HepG2 (cell line): ENCODE measurements at regions of chr2 and their contacts with region 1.

Region 1: GRCh38 chr2:226618875-226619605 is 180.6 kb downstream of the IRS1 start:
- DNase-seq: peak; percentile 98
- ATAC-seq: peak; percentile 86
- H3K4me3 ChIP-seq: peak overlapping the region in 1 of 3 experiments; percentile 18; a peak in 1 of 6 replicates
- H3K27ac ChIP-seq: peak overlapping the region; percentile 75
- H3K4me1 ChIP-seq: peaks cover 66% of the 10 kb centered on the region
- H3K27me3 ChIP-seq: no peaks in the 10 kb centered on the region
- CTCF ChIP-seq: no peak
- EP300 ChIP-seq: peak; percentile 26 to 100; a peak in 2 of 4 replicates
- POLR2A ChIP-seq: no peak
- RAD21 ChIP-seq: no peak

Region 2: GRCh38 chr2:225889446-225889850 is 729.6 kb before region 1 on chr2:
- CTCF ChIA-PET with region 1: no interaction called
- POLR2A ChIA-PET with region 1: no interaction called
- in situ Hi-C with region 1: loop called (anchors 25 kb)
- intact Hi-C with region 1: loop called (anchors 1 kb)
- DNase-seq: peak; percentile 57
- ATAC-seq: peak; percentile 71
- H3K4me3 ChIP-seq: no peak overlapping the region
- H3K27ac ChIP-seq: no peak overlapping the region
- H3K4me1 ChIP-seq: peaks cover 4% of the 10 kb centered on the region
- H3K27me3 ChIP-seq: no peaks in the 10 kb centered on the region
- CTCF ChIP-seq: peak; percentile 81
- EP300 ChIP-seq: peak in 1 of 2 experiments; percentile 49; a peak in 1 of 4 replicates
- POLR2A ChIP-seq: no peak
- RAD21 ChIP-seq: peak; percentile 51; the same call in 1 of the 2 replicates

Region 3: GRCh38 chr2:226215902-226216503 is 403.0 kb before region 1 on chr2:
- CTCF ChIA-PET with region 1: no interaction called
- POLR2A ChIA-PET with region 1: no interaction called
- in situ Hi-C with region 1: no loop called
- intact Hi-C with region 1: loop called (anchors 10 kb)
- DNase-seq: peak; percentile 63
- ATAC-seq: peak; percentile 99
- H3K4me3 ChIP-seq: no peak overlapping the region
- H3K27ac ChIP-seq: no peak overlapping the region
- H3K4me1 ChIP-seq: 0 out of 2 replicates have a peak, but pooled peaks cover 5% of the 10 kb centered on the region
- H3K27me3 ChIP-seq: no peaks in the 10 kb centered on the region
- CTCF ChIP-seq: peak; percentile 89
- EP300 ChIP-seq: peak in 1 of 2 experiments; percentile 45; a peak in 1 of 4 replicates
- POLR2A ChIP-seq: no peak
- RAD21 ChIP-seq: peak; percentile 78

Region 4: DNA sequence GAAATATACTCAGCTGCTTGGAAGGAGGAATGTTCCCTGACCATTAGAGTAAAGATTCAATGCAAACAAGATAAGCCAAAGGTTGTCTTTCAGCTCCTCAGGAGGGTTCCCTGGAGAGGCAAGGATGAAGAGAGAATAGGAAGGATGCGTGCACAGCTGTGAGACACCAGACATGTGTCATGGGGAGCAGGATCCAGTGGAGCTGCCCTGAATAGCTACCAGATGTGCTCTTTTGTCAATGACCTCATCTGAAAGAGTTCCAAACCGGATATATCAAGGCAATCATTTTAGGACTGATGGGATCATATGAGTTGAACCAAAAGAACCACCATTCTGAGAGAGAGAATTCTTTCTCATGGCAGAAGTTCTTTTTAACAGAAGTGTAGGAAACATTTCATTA is 310.1 kb before region 1 on chr2:
- CTCF ChIA-PET with region 1: no interaction called
- POLR2A ChIA-PET with region 1: no interaction called
- in situ Hi-C with region 1: no loop called
- intact Hi-C with region 1: no loop called
- DNase-seq: no peak
- ATAC-seq: no peak; the same call in 2 of the 3 replicates
- H3K4me3 ChIP-seq: no peak overlapping the region
- H3K27ac ChIP-seq: no peak overlapping the region
- H3K4me1 ChIP-seq: peaks cover 11% of the 10 kb centered on the region
- H3K27me3 ChIP-seq: no peaks in the 10 kb centered on the region
- CTCF ChIP-seq: no peak
- EP300 ChIP-seq: no peak
- POLR2A ChIP-seq: no peak
- RAD21 ChIP-seq: no peak

Region 5: GRCh38 chr2:226450141-226450540 is 168.9 kb before region 1 on chr2:
- CTCF ChIA-PET with region 1: no interaction called
- POLR2A ChIA-PET with region 1: no interaction called
- in situ Hi-C with region 1: no loop called
- intact Hi-C with region 1: no loop called
- DNase-seq: no peak
- ATAC-seq: no peak
- H3K4me3 ChIP-seq: no peak overlapping the region
- H3K27ac ChIP-seq: no peak overlapping the region
- H3K4me1 ChIP-seq: peaks cover 22% of the 10 kb centered on the region
- H3K27me3 ChIP-seq: no peaks in the 10 kb centered on the region
- CTCF ChIP-seq: no peak
- EP300 ChIP-seq: no peak
- POLR2A ChIP-seq: no peak
- RAD21 ChIP-seq: no peak

Region 6: DNA sequence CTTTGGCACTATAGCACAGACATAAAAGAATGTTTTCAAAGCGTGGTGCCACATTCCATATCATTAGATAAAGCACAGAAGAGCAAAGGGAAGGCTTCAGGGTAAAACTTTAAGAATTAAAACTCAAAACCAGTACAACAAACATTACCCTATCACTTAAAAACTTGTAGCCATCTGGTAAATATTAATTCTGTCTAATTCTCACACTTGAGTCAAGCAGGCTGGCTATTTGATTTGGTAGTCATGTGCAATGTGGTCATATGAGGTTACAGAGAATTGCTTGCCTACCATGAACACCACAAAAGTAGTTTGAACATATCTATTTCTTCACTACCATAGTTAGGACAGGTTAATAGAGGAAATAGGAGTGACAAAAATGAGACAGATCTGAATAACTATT is 64.3 kb before region 1 on chr2:
- CTCF ChIA-PET with region 1: no interaction called
- POLR2A ChIA-PET with region 1: no interaction called
- in situ Hi-C with region 1: no loop called
- intact Hi-C with region 1: loop called (anchors 1 kb)
- DNase-seq: no peak
- ATAC-seq: no peak
- H3K4me3 ChIP-seq: no peak overlapping the region
- H3K27ac ChIP-seq: no peak overlapping the region
- H3K4me1 ChIP-seq: peaks cover 36% of the 10 kb centered on the region
- H3K27me3 ChIP-seq: no peaks in the 10 kb centered on the region
- CTCF ChIP-seq: no peak
- EP300 ChIP-seq: no peak
- POLR2A ChIP-seq: no peak
- RAD21 ChIP-seq: no peak

Region 7: GRCh38 chr2:226600184-226600583 is 18.9 kb before region 1 on chr2:
- CTCF ChIA-PET with region 1: no interaction called
- POLR2A ChIA-PET with region 1: no interaction called
- in situ Hi-C with region 1: no loop called
- intact Hi-C with region 1: loop called (anchors 2 kb)
- DNase-seq: peak; percentile 86
- ATAC-seq: peak; percentile 78
- H3K4me3 ChIP-seq: no peak overlapping the region
- H3K27ac ChIP-seq: no peak overlapping the region
- H3K4me1 ChIP-seq: peaks cover 24% of the 10 kb centered on the region
- H3K27me3 ChIP-seq: no peaks in the 10 kb centered on the region
- CTCF ChIP-seq: no peak
- EP300 ChIP-seq: peak in 1 of 2 experiments; percentile 80; a peak in 2 of 4 replicates
- POLR2A ChIP-seq: no peak
- RAD21 ChIP-seq: no peak

Region 8: GRCh38 chr2:226733189-226733858 is 114.3 kb after region 1 on chr2:
- CTCF ChIA-PET with region 1: no interaction called
- POLR2A ChIA-PET with region 1: interaction called, 9 read pairs
- in situ Hi-C with region 1: no loop called
- intact Hi-C with region 1: loop called (anchors 1 kb)
- DNase-seq: peak; percentile 98
- ATAC-seq: peak; percentile 92
- H3K4me3 ChIP-seq: peak overlapping the region in 2 of 3 experiments; percentile 27 to 45; a peak in 2 of 6 replicates
- H3K27ac ChIP-seq: peak overlapping the region; percentile 82
- H3K4me1 ChIP-seq: peaks cover 75% of the 10 kb centered on the region
- H3K27me3 ChIP-seq: no peaks in the 10 kb centered on the region
- CTCF ChIP-seq: peak; percentile 31; the same call in 1 of the 2 replicates
- EP300 ChIP-seq: peak; percentile 87 to 99
- POLR2A ChIP-seq: 0 out of 4 replicates have a peak, but pooled peaks of 1 of the 2 experiments have one; percentile 25
- RAD21 ChIP-seq: peak; percentile 31; the same call in 1 of the 2 replicates